GM12878 (cell line): ENCODE measurements at regions of chr20 and their contacts with region 1.

Region 1: GRCh38 chr20:60210779-60211617 is 252.8 kb downstream of the CDH26 start:
- DNase-seq: no peak
- ATAC-seq: peak; percentile 77
- H3K4me3 ChIP-seq: no peak overlapping the region
- H3K27ac ChIP-seq: no peak overlapping the region
- H3K4me1 ChIP-seq: no peaks in the 10 kb centered on the region
- H3K27me3 ChIP-seq: no peaks in the 10 kb centered on the region
- CTCF ChIP-seq: peak; percentile 69 to 77 (median 71)
- EP300 ChIP-seq: no peak
- POLR2A ChIP-seq: no peak
- RAD21 ChIP-seq: peak; percentile 85

Region 2: GRCh38 chr20:60057123-60057801 is 153.7 kb before region 1 on chr20:
- CTCF ChIA-PET with region 1: interaction called, 17 read pairs
- POLR2A ChIA-PET with region 1: no interaction called
- RAD21 ChIA-PET with region 1: interaction called, 5 read pairs
- SMC1A ChIA-PET with region 1: interaction called, 6 read pairs
- in situ Hi-C with region 1: no loop called
- intact Hi-C with region 1: no loop called
- DNase-seq: peak; percentile 17
- ATAC-seq: peak; percentile 85
- H3K4me3 ChIP-seq: no peak overlapping the region
- H3K27ac ChIP-seq: no peak overlapping the region
- H3K4me1 ChIP-seq: no peaks in the 10 kb centered on the region
- H3K27me3 ChIP-seq: no peaks in the 10 kb centered on the region
- CTCF ChIP-seq: peak; percentile 82 to 92 (median 82)
- EP300 ChIP-seq: no peak
- POLR2A ChIP-seq: no peak
- RAD21 ChIP-seq: peak; percentile 86

Region 3: DNA sequence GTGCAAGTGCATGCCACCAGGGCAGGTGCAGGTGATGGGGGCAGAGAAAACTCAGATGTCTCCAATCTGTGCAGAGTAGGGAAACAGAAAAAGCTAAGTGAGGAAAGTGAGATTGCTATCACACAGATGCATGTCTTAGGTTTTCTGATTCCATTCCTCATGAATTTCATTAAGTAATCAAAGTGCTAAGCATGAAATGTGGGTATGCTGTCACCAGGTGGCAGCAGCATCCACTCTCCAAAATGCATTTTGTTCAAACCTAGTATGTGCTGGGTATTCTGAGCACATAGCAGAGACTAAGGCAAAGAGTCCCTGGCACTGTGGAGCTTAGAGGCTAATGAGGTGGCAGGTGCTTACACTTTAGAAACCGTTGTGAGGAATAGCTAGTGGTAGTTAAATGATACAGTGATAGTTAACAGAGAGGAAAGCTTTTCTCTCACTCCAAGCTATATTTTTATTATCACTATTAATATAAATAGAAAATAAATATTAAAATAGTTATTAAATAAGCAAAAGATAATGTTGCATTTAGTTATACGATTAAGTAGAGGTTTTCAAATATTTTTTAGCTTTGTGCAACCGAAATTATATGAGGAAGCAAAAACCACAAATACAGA is 73.3 kb before region 1 on chr20:
- CTCF ChIA-PET with region 1: interaction called, 29 read pairs
- POLR2A ChIA-PET with region 1: no interaction called
- RAD21 ChIA-PET with region 1: interaction called, 8 read pairs
- SMC1A ChIA-PET with region 1: interaction called, 15 read pairs
- in situ Hi-C with region 1: no loop called
- intact Hi-C with region 1: no loop called
- DNase-seq: no peak
- ATAC-seq: peak; percentile 38; the same call in 2 of the 3 replicates
- H3K4me3 ChIP-seq: peak overlapping the region; percentile 67; the same call in 1 of the 2 replicates
- H3K27ac ChIP-seq: no peak overlapping the region
- H3K4me1 ChIP-seq: no peaks in the 10 kb centered on the region
- H3K27me3 ChIP-seq: no peaks in the 10 kb centered on the region
- CTCF ChIP-seq: peak; percentile 44 to 73 (median 51); a peak in 4 of 6 replicates
- EP300 ChIP-seq: no peak
- POLR2A ChIP-seq: no peak
- RAD21 ChIP-seq: peak; percentile 63

Region 4: GRCh38 chr20:60184827-60185226 is 26.2 kb before region 1 on chr20:
- CTCF ChIA-PET with region 1: no interaction called
- POLR2A ChIA-PET with region 1: no interaction called
- RAD21 ChIA-PET with region 1: no interaction called
- SMC1A ChIA-PET with region 1: no interaction called
- in situ Hi-C with region 1: no loop called
- intact Hi-C with region 1: no loop called
- DNase-seq: no peak
- ATAC-seq: no peak
- H3K4me3 ChIP-seq: no peak overlapping the region
- H3K27ac ChIP-seq: no peak overlapping the region
- H3K4me1 ChIP-seq: no peaks in the 10 kb centered on the region
- H3K27me3 ChIP-seq: no peaks in the 10 kb centered on the region
- CTCF ChIP-seq: no peak
- EP300 ChIP-seq: no peak
- POLR2A ChIP-seq: no peak
- RAD21 ChIP-seq: no peak

Region 5: GRCh38 chr20:60228255-60228654 is 17.3 kb after region 1 on chr20:
- CTCF ChIA-PET with region 1: interaction called, 17 read pairs
- POLR2A ChIA-PET with region 1: no interaction called
- RAD21 ChIA-PET with region 1: no interaction called
- SMC1A ChIA-PET with region 1: interaction called, 4 read pairs
- in situ Hi-C with region 1: no loop called
- intact Hi-C with region 1: no loop called
- DNase-seq: no peak
- ATAC-seq: no peak; the same call in 2 of the 3 replicates
- H3K4me3 ChIP-seq: no peak overlapping the region
- H3K27ac ChIP-seq: no peak overlapping the region
- H3K4me1 ChIP-seq: no peaks in the 10 kb centered on the region
- H3K27me3 ChIP-seq: no peaks in the 10 kb centered on the region
- CTCF ChIP-seq: no peak
- EP300 ChIP-seq: no peak
- POLR2A ChIP-seq: no peak
- RAD21 ChIP-seq: no peak

Region 6: DNA sequence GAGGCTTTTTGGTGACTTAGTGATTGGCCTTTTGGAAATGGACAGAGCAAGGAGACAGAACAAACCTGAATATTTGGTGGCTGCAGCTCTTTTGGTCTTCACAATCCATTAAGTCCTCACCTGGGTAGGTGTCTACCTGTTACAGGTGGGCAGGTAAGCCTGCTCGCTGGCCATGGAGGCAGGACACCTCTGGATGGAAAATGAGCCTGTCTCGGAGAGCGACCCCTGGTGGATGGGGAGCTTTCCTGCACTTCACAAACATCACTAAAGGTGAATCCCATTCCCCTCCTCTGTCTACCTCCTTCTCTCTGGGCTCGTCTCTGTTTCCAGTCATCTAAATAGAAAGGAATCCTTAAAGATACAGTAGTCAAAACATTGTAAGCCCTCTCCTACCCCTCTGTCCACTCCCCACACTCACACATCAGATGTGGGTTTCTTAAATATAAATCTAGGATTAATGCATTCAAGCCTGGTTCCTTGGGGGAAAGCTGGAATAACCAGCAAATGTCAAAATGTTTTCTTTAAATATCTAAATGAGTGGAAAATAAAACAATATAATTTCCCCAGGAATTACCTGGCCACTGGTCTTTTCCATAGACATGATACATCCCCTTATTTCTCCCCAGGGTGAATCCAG is 52.1 kb after region 1 on chr20:
- CTCF ChIA-PET with region 1: interaction called, 55 read pairs
- POLR2A ChIA-PET with region 1: no interaction called
- RAD21 ChIA-PET with region 1: interaction called, 3 read pairs
- SMC1A ChIA-PET with region 1: interaction called, 7 read pairs
- in situ Hi-C with region 1: no loop called
- intact Hi-C with region 1: no loop called
- DNase-seq: no peak
- ATAC-seq: no peak
- H3K4me3 ChIP-seq: no peak overlapping the region
- H3K27ac ChIP-seq: no peak overlapping the region
- H3K4me1 ChIP-seq: no peaks in the 10 kb centered on the region
- H3K27me3 ChIP-seq: no peaks in the 10 kb centered on the region
- CTCF ChIP-seq: peak; percentile 50 to 69 (median 69); a peak in 5 of 6 replicates
- EP300 ChIP-seq: no peak
- POLR2A ChIP-seq: no peak
- RAD21 ChIP-seq: peak; percentile 47

Region 7: GRCh38 chr20:61896058-61896961 is 1685.3 kb after region 1 on chr20:
- CTCF ChIA-PET with region 1: no interaction called
- POLR2A ChIA-PET with region 1: no interaction called
- RAD21 ChIA-PET with region 1: no interaction called
- SMC1A ChIA-PET with region 1: interaction called, 3 read pairs
- in situ Hi-C with region 1: no loop called
- intact Hi-C with region 1: loop called (anchors 5 kb)
- DNase-seq: no peak
- ATAC-seq: peak; percentile 99
- H3K4me3 ChIP-seq: no peak overlapping the region
- H3K27ac ChIP-seq: no peak overlapping the region
- H3K4me1 ChIP-seq: no peaks in the 10 kb centered on the region
- H3K27me3 ChIP-seq: no peaks in the 10 kb centered on the region
- CTCF ChIP-seq: peak; percentile 69 to 86 (median 85)
- EP300 ChIP-seq: no peak
- POLR2A ChIP-seq: no peak
- RAD21 ChIP-seq: peak; percentile 75